Caco-2 (cell line): ENCODE measurements at regions of chr6 and their contacts with region 1.

Region 1: GRCh38 chr6:20056350-20056992 is 155.8 kb downstream of the MBOAT1 start:
- DNase-seq: peak in 1 of 2 experiments; percentile 31
- H3K4me3 ChIP-seq: no peak overlapping the region
- H3K4me3 Mint-ChIP-seq: no peak overlapping the region
- H3K27ac Mint-ChIP-seq: no peak overlapping the region
- H3K4me1 ChIP-seq: no peaks in the 10 kb centered on the region
- H3K4me1 Mint-ChIP-seq: no peaks in the 10 kb centered on the region
- H3K27me3 ChIP-seq: no peaks in the 10 kb centered on the region
- H3K27me3 Mint-ChIP-seq: peaks cover 12% of the 10 kb centered on the region
- CTCF ChIP-seq: peak; percentile 32 to 35

Region 2: GRCh38 chr6:18595774-18596530 is 1460.5 kb before region 1 on chr6:
- CTCF ChIA-PET with region 1: no interaction called
- POLR2A ChIA-PET with region 1: no interaction called
- intact Hi-C with region 1: loop called (anchors 5 kb)
- DNase-seq: peak; percentile 40 to 67
- H3K4me3 ChIP-seq: no peak overlapping the region
- H3K4me3 Mint-ChIP-seq: no peak overlapping the region
- H3K27ac Mint-ChIP-seq: no peak overlapping the region
- H3K4me1 ChIP-seq: no peaks in the 10 kb centered on the region
- H3K4me1 Mint-ChIP-seq: no peaks in the 10 kb centered on the region
- H3K27me3 ChIP-seq: no peaks in the 10 kb centered on the region
- H3K27me3 Mint-ChIP-seq: peaks cover 12% of the 10 kb centered on the region
- CTCF ChIP-seq: peak; percentile 80 to 92

Region 3: GRCh38 chr6:18997375-18997826 is 1059.1 kb before region 1 on chr6:
- CTCF ChIA-PET with region 1: no interaction called
- POLR2A ChIA-PET with region 1: no interaction called
- intact Hi-C with region 1: loop called (anchors 1 kb)
- DNase-seq: peak; percentile 30 to 38
- H3K4me3 ChIP-seq: no peak overlapping the region
- H3K4me3 Mint-ChIP-seq: no peak overlapping the region
- H3K27ac Mint-ChIP-seq: no peak overlapping the region
- H3K4me1 ChIP-seq: no peaks in the 10 kb centered on the region
- H3K4me1 Mint-ChIP-seq: no peaks in the 10 kb centered on the region
- H3K27me3 ChIP-seq: no peaks in the 10 kb centered on the region
- H3K27me3 Mint-ChIP-seq: peaks cover 13% of the 10 kb centered on the region
- CTCF ChIP-seq: peak; percentile 36 to 76

Region 4: GRCh38 chr6:19812512-19813119 is 243.9 kb before region 1 on chr6:
- CTCF ChIA-PET with region 1: no interaction called
- POLR2A ChIA-PET with region 1: no interaction called
- intact Hi-C with region 1: loop called (anchors 1 kb)
- DNase-seq: peak in 1 of 2 experiments; percentile 8
- H3K4me3 ChIP-seq: no peak overlapping the region
- H3K4me3 Mint-ChIP-seq: no peak overlapping the region
- H3K27ac Mint-ChIP-seq: no peak overlapping the region
- H3K4me1 ChIP-seq: peaks cover 7% of the 10 kb centered on the region; the same call in 1 of the 2 replicates
- H3K4me1 Mint-ChIP-seq: peaks cover 8% of the 10 kb centered on the region
- H3K27me3 ChIP-seq: no peaks in the 10 kb centered on the region
- H3K27me3 Mint-ChIP-seq: peaks cover 18% of the 10 kb centered on the region
- CTCF ChIP-seq: peak; percentile 42 to 69

Region 5: DNA sequence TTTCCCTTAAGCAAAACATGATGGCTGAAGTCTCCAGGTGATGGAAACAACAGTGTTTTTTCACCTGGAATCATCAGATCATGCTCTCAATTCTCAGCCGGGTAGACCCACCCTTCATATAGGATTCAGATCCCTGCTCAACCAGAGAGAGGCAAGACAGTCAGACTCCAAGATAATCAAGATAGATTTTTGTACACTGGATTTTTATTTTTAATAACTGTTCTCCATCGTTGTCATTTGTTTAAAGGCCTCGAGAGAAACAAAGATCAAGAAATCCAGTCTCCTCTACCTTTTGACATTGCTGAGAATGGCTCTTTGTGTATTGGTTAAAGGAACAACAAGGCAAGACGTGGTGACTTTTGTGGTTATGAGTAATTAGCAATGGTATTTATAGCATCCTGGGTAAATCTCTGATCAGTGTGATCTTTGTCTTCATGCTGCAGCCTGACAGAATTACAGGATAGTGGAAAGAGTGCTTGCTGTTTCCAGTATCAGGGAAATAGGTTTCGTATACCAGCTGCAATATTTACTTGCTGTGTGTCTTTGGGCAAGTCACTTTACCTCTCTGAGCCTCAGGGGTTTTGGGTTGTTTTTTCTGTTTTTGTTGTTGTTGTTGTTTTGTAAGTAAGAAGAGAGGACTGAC is 189.4 kb before region 1 on chr6:
- CTCF ChIA-PET with region 1: no interaction called
- POLR2A ChIA-PET with region 1: no interaction called
- intact Hi-C with region 1: loop called (anchors 5 kb)
- DNase-seq: no peak
- H3K4me3 ChIP-seq: no peak overlapping the region
- H3K4me3 Mint-ChIP-seq: no peak overlapping the region
- H3K27ac Mint-ChIP-seq: no peak overlapping the region
- H3K4me1 ChIP-seq: no peaks in the 10 kb centered on the region
- H3K4me1 Mint-ChIP-seq: no peaks in the 10 kb centered on the region
- H3K27me3 ChIP-seq: no peaks in the 10 kb centered on the region
- H3K27me3 Mint-ChIP-seq: peaks cover 13% of the 10 kb centered on the region
- CTCF ChIP-seq: no peak